CD8-positive, alpha-beta T cell (primary cell): ENCODE measurements at regions of chr5 and their contacts with region 1.

Region 1: DNA sequence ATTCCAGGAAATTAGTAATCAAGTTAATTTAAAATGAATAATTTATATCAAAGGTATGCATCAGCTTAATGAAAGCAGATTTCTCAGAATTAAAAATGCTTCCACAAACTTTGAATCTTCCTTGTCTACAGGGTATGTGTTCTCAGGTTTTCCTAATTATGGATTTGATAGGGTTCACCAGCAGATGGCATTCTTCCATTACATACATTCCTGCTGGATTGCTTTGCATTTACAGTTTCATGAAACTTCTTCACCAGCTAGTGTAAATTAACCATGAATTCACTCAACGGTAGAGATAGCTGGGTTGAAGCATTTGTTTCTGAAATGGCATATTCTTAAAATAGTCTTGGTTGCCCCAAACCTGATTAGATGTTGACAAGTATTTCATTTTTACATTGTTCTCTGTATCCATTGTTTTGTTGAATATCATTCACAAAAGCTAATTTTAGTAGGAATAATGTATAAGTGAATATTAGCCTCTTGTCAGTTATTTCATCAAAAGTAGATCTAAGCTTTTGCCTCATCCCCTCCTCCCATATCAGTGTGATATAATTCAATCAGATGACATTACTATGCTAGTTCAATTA is 68.7 kb upstream of the WDR41 start:
- DNase-seq: peak in 2 of 9 experiments; percentile 27 to 37
- ATAC-seq: no peak
- H3K4me3 ChIP-seq: no peak overlapping the region
- H3K4me3 Mint-ChIP-seq: no peak overlapping the region
- H3K27ac ChIP-seq: no peak overlapping the region
- H3K27ac Mint-ChIP-seq: no peak overlapping the region
- H3K4me1 ChIP-seq: no peaks in the 10 kb centered on the region
- H3K4me1 Mint-ChIP-seq: no peaks in the 10 kb centered on the region
- H3K27me3 ChIP-seq: no peaks in the 10 kb centered on the region
- H3K27me3 Mint-ChIP-seq: peaks cover 4% of the 10 kb centered on the region
- CTCF ChIP-seq: peak; percentile 28

Region 2: GRCh38 chr5:78162253-78162862 is 601.6 kb after region 1 on chr5:
- CTCF ChIA-PET with region 1: no interaction called
- POLR2A ChIA-PET with region 1: no interaction called
- intact Hi-C with region 1: loop called in 1 of 2 experiments (anchors 5 kb)
- DNase-seq: peak in 2 of 9 experiments; percentile 27 to 43
- ATAC-seq: no peak
- H3K4me3 ChIP-seq: no peak overlapping the region
- H3K4me3 Mint-ChIP-seq: no peak overlapping the region
- H3K27ac ChIP-seq: no peak overlapping the region
- H3K27ac Mint-ChIP-seq: no peak overlapping the region
- H3K4me1 ChIP-seq: no peaks in the 10 kb centered on the region
- H3K4me1 Mint-ChIP-seq: no peaks in the 10 kb centered on the region
- H3K27me3 ChIP-seq: no peaks in the 10 kb centered on the region
- H3K27me3 Mint-ChIP-seq: no peaks in the 10 kb centered on the region
- CTCF ChIP-seq: no peak

Region 3: DNA sequence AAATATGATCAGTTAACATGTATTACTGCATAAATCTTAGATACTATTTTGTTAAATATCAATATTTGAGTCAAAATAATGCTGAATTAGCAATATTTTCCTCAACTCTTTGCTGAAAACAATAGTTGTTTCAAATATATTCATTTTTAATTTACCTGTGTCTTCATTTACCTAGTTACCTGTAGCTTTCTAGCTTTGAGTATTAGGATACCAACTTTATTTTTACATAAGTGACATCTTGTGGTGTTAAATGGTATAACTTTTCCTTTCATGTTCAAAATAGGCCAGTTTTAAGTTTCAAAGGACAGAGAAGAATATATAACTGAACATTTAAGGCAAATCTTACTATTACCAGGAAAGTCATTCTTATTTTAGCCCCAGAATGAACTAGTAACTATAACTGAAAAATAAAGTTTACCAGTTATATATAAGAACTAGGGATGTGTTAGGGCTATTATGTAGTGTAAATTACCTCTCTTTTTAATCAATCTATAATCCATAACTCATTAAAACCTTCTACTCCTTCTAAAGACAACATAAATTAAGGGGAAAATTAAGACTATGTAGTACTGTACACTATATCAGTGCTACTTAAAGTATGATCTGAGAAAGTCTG is 708.4 kb after region 1 on chr5:
- CTCF ChIA-PET with region 1: no interaction called
- POLR2A ChIA-PET with region 1: no interaction called
- intact Hi-C with region 1: loop called in 1 of 2 experiments (anchors 1 kb)
- DNase-seq: peak in 2 of 9 experiments; percentile 15 to 41
- ATAC-seq: peak; percentile 57
- H3K4me3 ChIP-seq: no peak overlapping the region
- H3K4me3 Mint-ChIP-seq: no peak overlapping the region
- H3K27ac ChIP-seq: no peak overlapping the region
- H3K27ac Mint-ChIP-seq: no peak overlapping the region
- H3K4me1 ChIP-seq: no peaks in the 10 kb centered on the region
- H3K4me1 Mint-ChIP-seq: peaks cover 30% of the 10 kb centered on the region
- H3K27me3 ChIP-seq: no peaks in the 10 kb centered on the region
- H3K27me3 Mint-ChIP-seq: no peaks in the 10 kb centered on the region
- CTCF ChIP-seq: peak; percentile 83

Region 4: GRCh38 chr5:78300464-78301045 is 739.8 kb after region 1 on chr5:
- CTCF ChIA-PET with region 1: interaction called, 4 read pairs
- POLR2A ChIA-PET with region 1: no interaction called
- intact Hi-C with region 1: loop called in 1 of 2 experiments (anchors 2 kb)
- DNase-seq: peak in 2 of 9 experiments; percentile 39 to 55
- ATAC-seq: no peak
- H3K4me3 ChIP-seq: no peak overlapping the region
- H3K4me3 Mint-ChIP-seq: no peak overlapping the region
- H3K27ac ChIP-seq: no peak overlapping the region
- H3K27ac Mint-ChIP-seq: no peak overlapping the region
- H3K4me1 ChIP-seq: no peaks in the 10 kb centered on the region
- H3K4me1 Mint-ChIP-seq: peaks cover 4% of the 10 kb centered on the region
- H3K27me3 ChIP-seq: peaks cover 0 to 2% of the 10 kb centered on the region in 2 experiments
- H3K27me3 Mint-ChIP-seq: no peaks in the 10 kb centered on the region
- CTCF ChIP-seq: peak; percentile 49